ENCODE measurements at regions of chr6 and their contacts with region 1.

Region 1: DNA sequence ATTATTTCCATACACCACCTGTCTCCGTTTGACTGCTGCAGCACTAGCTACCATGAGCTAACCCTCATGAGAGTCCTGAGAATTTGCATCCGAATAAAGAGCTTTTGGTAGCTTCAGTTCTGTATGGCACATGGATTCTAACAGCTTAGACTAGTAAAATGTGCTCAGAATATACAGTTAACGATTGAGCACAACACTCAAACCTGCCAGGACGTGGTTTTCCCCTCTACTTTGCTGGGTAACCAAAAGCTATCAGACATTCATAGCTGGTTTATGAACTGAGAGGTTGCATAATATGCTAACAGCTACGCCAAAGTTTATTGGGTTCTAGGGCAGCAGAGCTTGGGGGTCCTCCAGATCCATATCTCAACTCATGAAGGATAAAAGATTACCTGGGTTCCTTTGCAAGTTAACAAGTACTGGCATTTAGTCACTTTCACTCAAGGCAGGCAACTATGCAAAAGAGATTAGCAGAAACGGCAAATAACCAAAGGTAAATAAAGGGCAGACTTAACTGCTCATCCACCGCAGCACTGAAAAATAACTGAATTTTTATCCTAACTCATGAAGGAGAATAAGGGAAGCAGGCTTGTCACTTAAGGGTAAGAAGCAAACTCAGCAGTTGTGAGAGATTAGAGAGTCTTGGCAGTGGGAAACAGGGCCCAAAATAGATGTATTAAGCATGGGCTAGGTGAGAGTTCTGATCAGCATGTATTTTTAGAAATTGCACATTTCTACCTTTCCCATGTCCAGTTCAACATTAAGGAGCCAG is 29.4 kb downstream of the NUDT3 start:
- DNase-seq: peak; percentile 38
- ATAC-seq: peak; percentile 86
- H3K4me3 ChIP-seq: peak overlapping the region; percentile 17; the same call in 1 of the 2 replicates
- H3K27ac ChIP-seq: peak overlapping the region; percentile 45
- H3K4me1 ChIP-seq: peaks cover 8% of the 10 kb centered on the region
- H3K27me3 ChIP-seq: no peaks in the 10 kb centered on the region
- CTCF ChIP-seq: no peak
- EP300 ChIP-seq: no peak
- POLR2A ChIP-seq: no peak
- RAD21 ChIP-seq: no peak

Region 2: GRCh38 chr6:34248727-34249551 is 114.2 kb before region 1 on chr6 and contains the start of gene SMIM29:
- CTCF ChIA-PET with region 1: interaction called, 13 read pairs
- POLR2A ChIA-PET with region 1: no interaction called
- RAD21 ChIA-PET with region 1: interaction called, 9 read pairs
- SMC1A ChIA-PET with region 1: interaction called, 4 read pairs
- in situ Hi-C with region 1: no loop called
- intact Hi-C with region 1: no loop called
- DNase-seq: peak; percentile 62
- ATAC-seq: peak; percentile 88
- H3K4me3 ChIP-seq: peak within 1 kb of the TSS; percentile 84
- H3K27ac ChIP-seq: peak within 1 kb of the TSS; percentile 78
- H3K4me1 ChIP-seq: peaks cover 19% of the 10 kb centered on the region
- H3K27me3 ChIP-seq: no peaks in the 10 kb centered on the region
- CTCF ChIP-seq: peak; percentile 82 to 86 (median 86)
- EP300 ChIP-seq: no peak
- POLR2A ChIP-seq: peak; percentile 91
- RAD21 ChIP-seq: peak; percentile 81
- polyA plus RNA-seq, gene SMIM29: 7.1 to 8.4 TPM

Region 3: GRCh38 chr6:34315780-34316179 is 47.3 kb before region 1 on chr6:
- CTCF ChIA-PET with region 1: interaction called, 3 read pairs
- POLR2A ChIA-PET with region 1: interaction called, 5 read pairs
- RAD21 ChIA-PET with region 1: interaction called, 4 read pairs
- SMC1A ChIA-PET with region 1: interaction called, 11 read pairs
- in situ Hi-C with region 1: no loop called
- intact Hi-C with region 1: no loop called
- DNase-seq: peak; percentile 71
- ATAC-seq: peak; percentile 81
- H3K4me3 ChIP-seq: peak overlapping the region; percentile 37
- H3K27ac ChIP-seq: peak overlapping the region; percentile 84
- H3K4me1 ChIP-seq: peaks cover 43% of the 10 kb centered on the region
- H3K27me3 ChIP-seq: no peaks in the 10 kb centered on the region
- CTCF ChIP-seq: no peak
- EP300 ChIP-seq: peak; percentile 37 to 54; a peak in 2 of 4 replicates
- POLR2A ChIP-seq: no peak
- RAD21 ChIP-seq: no peak

Region 4: DNA sequence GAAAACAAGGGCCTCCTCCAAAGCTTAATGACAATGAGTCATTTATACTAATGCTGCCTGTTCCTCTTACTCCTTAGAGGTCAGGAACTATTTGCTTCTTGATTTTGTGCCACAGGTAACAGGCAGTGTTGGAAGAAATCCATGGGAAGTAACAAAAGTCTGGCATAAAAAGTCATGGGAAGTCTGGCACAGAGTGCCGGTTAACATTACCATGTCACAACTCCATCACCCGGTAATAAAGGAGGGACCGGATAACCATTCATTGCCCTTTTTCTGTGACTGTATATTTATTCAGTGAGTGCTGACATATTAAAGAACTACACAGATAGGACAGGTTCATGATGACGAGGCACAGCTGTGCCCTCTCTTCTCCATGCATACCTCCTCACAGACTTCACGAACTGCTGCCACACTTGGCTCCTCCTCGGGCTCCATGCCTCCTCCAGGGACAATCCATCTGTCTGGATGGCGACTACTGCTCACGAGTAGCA is 21.6 kb before region 1 on chr6:
- CTCF ChIA-PET with region 1: interaction called, 6 read pairs
- POLR2A ChIA-PET with region 1: interaction called, 7 read pairs
- RAD21 ChIA-PET with region 1: interaction called, 9 read pairs
- SMC1A ChIA-PET with region 1: interaction called, 25 read pairs
- in situ Hi-C with region 1: no loop called
- intact Hi-C with region 1: no loop called
- DNase-seq: no peak
- ATAC-seq: no peak
- H3K4me3 ChIP-seq: no peak overlapping the region
- H3K27ac ChIP-seq: no peak overlapping the region
- H3K4me1 ChIP-seq: peaks cover 18% of the 10 kb centered on the region
- H3K27me3 ChIP-seq: no peaks in the 10 kb centered on the region
- CTCF ChIP-seq: no peak
- EP300 ChIP-seq: no peak
- POLR2A ChIP-seq: no peak
- RAD21 ChIP-seq: no peak

Region 5: GRCh38 chr6:34386316-34387137 is 23.4 kb after region 1 on chr6:
- CTCF ChIA-PET with region 1: interaction called, 5 read pairs
- POLR2A ChIA-PET with region 1: interaction called, 14 read pairs
- RAD21 ChIA-PET with region 1: interaction called, 20 read pairs
- SMC1A ChIA-PET with region 1: interaction called, 22 read pairs
- in situ Hi-C with region 1: no loop called
- intact Hi-C with region 1: no loop called
- DNase-seq: no peak
- ATAC-seq: peak; percentile 14
- H3K4me3 ChIP-seq: no peak overlapping the region
- H3K27ac ChIP-seq: no peak overlapping the region
- H3K4me1 ChIP-seq: no peaks in the 10 kb centered on the region
- H3K27me3 ChIP-seq: no peaks in the 10 kb centered on the region
- CTCF ChIP-seq: no peak
- EP300 ChIP-seq: no peak
- POLR2A ChIP-seq: no peak
- RAD21 ChIP-seq: no peak

Measured in GM12878 (cell line).